ENCODE measurements at regions of chr16 and their contacts with region 1.

Region 1: DNA sequence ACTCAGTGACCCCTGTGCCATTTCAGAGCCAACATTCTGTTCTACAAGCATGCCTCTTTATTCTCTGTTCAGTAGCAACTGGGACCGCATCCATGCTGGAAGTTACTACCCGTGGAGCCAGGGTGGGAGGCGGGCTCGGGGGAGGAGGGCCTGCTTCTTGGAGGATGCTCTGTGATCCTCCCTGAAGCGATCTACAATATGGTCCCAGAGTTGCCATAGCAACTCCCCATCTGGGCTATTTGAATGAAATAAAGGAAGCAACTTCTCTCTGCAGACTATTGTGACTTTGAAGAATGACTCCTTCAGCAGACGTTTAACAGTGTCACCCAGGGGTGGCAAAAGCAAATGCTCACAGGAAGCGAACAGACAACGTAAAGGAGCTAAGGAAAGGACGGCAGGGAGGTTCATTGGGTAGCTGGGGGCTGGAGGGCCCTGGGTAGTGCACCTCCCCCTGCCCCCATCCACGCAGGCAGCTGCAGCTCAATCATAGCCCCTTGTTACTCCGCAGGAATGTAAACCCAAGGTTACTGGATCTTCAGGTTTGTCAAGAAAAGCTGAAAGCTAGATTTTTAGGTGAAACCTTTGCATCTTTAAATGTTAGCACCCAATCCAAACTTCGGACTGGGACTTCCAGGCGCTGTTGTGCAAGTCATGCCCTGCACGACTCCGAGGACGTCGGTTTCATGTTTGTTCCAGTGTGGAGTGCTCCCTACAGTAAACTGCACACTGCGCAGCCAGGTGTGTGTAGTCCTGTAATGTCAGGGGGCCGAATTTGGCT is 51.1 kb upstream of the MEAK7 start:
- DNase-seq: no peak
- ATAC-seq: no peak
- H3K4me3 Mint-ChIP-seq: peak overlapping the region; percentile 13
- H3K27ac Mint-ChIP-seq: peak overlapping the region; percentile 94
- H3K4me1 Mint-ChIP-seq: peaks cover 26% of the 10 kb centered on the region
- H3K27me3 Mint-ChIP-seq: no peaks in the 10 kb centered on the region

Region 2: GRCh38 chr16:84504420-84505248 is 51.0 kb before region 1 on chr16 and contains the start of gene MEAK7:
- POLR2A ChIA-PET with region 1: interaction called, 14 read pairs
- DNase-seq: peak; percentile 99
- ATAC-seq: peak; percentile 95
- H3K4me3 Mint-ChIP-seq: peak within 1 kb of the TSS; percentile 81
- H3K27ac Mint-ChIP-seq: peak within 1 kb of the TSS; percentile 82
- H3K4me1 Mint-ChIP-seq: peaks cover 39% of the 10 kb centered on the region
- H3K27me3 Mint-ChIP-seq: no peaks in the 10 kb centered on the region
- total RNA-seq, gene MEAK7: 95.7 to 98.3 TPM

Region 3: GRCh38 chr16:84593825-84594724 is 38.5 kb after region 1 on chr16:
- POLR2A ChIA-PET with region 1: interaction called, 78 read pairs
- DNase-seq: peak; percentile 82
- ATAC-seq: peak; percentile 87
- H3K4me3 Mint-ChIP-seq: peak overlapping the region; percentile 86
- H3K27ac Mint-ChIP-seq: peak overlapping the region; percentile 85
- H3K4me1 Mint-ChIP-seq: peaks cover 65% of the 10 kb centered on the region
- H3K27me3 Mint-ChIP-seq: no peaks in the 10 kb centered on the region

Region 4: GRCh38 chr16:84599521-84600202 is 44.1 kb after region 1 on chr16:
- POLR2A ChIA-PET with region 1: interaction called, 78 read pairs
- DNase-seq: peak; percentile 63
- ATAC-seq: peak; percentile 37
- H3K4me3 Mint-ChIP-seq: peak overlapping the region; percentile 80
- H3K27ac Mint-ChIP-seq: peak overlapping the region; percentile 92
- H3K4me1 Mint-ChIP-seq: peaks cover 75% of the 10 kb centered on the region
- H3K27me3 Mint-ChIP-seq: no peaks in the 10 kb centered on the region

Measured in activated naive CD8-positive, alpha-beta T cell treated with anti-CD3 and anti-CD28 coated beads, Interleukin-2, amount 10 ng/mL, durations not matched to agents 7 days and 5 days (primary cell).